ENCODE measurements at regions of chr5 and their contacts with region 1.

Region 1: DNA sequence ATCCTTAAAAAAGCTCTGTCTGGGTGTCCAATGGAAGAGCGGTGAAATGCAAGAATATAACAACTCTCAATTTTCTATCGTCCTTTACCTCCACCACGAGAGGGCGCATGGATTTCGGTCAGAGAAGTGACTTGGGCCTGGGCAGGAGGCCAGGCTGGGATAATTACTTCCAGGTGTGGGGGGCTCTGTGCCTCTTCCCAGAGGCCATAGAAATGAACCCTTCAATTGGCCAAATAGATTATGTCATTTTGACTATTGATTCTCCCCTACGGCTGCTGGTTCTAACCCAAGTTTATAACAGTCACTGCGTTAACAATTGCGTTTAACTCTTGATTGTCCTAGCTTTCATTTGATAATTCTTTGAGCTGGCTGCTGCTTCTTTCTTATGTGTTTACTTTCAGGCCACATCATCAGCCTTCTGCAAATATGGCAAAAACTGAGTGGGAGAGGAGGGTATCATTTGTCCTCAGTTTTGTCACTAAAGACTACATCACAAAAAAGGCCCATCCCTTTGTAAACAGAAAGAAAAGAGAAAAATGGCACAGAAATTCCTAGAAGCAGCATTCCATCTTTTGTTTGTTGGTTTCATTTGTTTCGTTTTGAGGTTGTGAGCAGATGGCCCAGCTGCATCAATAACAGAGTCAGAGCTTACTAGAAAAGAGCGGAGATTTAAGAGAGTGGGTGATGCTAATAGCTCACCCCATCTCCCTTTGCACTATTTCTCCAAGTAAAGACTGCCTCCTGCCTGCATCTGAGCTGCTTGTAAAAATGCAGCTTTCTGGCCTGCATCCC is 45.4 kb upstream of the ZFR start:
- H3K4me3 Mint-ChIP-seq: no peak overlapping the region
- H3K27ac Mint-ChIP-seq: no peak overlapping the region
- H3K4me1 Mint-ChIP-seq: no peaks in the 10 kb centered on the region
- H3K27me3 Mint-ChIP-seq: no peaks in the 10 kb centered on the region

Region 2: GRCh38 chr5:32613050-32613672 is 123.2 kb after region 1 on chr5:
- intact Hi-C with region 1: loop called (anchors 5 kb)
- H3K4me3 Mint-ChIP-seq: no peak overlapping the region
- H3K27ac Mint-ChIP-seq: no peak overlapping the region
- H3K4me1 Mint-ChIP-seq: no peaks in the 10 kb centered on the region
- H3K27me3 Mint-ChIP-seq: no peaks in the 10 kb centered on the region

Region 3: GRCh38 chr5:32709781-32710549 is 220.0 kb after region 1 on chr5:
- intact Hi-C with region 1: no loop called
- H3K4me3 Mint-ChIP-seq: peak overlapping the region; percentile 76
- H3K27ac Mint-ChIP-seq: no peak overlapping the region
- H3K4me1 Mint-ChIP-seq: peaks cover 57% of the 10 kb centered on the region
- H3K27me3 Mint-ChIP-seq: peaks cover 66% of the 10 kb centered on the region